Mammary epithelial cell (primary cell): ENCODE measurements at regions of chr19 and their contacts with region 1.

Region 1: DNA sequence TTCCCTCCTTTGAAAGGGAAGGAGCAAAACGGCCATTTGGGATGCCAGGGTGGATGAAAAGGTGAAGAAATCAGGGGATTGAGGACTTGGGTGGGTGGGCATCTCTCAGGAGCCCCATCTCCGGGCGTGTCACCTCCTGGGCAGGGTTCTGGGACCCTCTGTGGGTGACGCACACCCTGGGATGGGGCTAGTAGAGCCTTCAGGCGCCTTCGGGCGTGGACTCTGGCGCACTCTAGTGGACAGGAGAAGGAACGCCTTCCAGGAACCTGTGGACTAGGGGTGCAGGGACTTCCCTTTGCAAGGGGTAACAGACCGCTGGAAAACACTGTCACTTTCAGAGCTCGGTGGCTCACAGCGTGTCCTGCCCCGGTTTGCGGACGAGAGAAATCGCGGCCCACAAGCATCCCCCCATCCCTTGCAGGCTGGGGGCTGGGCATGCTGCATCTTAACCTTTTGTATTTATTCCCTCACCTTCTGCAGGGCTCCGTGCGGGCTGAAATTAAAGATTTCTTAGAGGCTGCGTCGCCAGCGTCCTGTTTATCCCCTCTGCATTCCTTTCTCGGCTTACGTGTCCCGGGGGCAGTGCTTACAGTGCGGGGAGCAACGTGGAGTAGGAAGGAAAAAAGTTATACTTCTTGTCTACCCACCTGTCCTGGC is 15.2 kb upstream of the S1PR4 start:
- DNase-seq: peak; percentile 25
- H3K4me3 ChIP-seq: no peak overlapping the region
- H3K27ac ChIP-seq: no peak overlapping the region
- H3K4me1 ChIP-seq: peaks cover 15% of the 10 kb centered on the region
- H3K27me3 ChIP-seq: no peaks in the 10 kb centered on the region
- CTCF ChIP-seq: peak; percentile 86 to 97

Region 2: GRCh38 chr19:3125900-3126524 is 37.3 kb before region 1 on chr19:
- CTCF ChIA-PET with region 1: no interaction called
- dilution Hi-C with region 1: no loop called
- in situ Hi-C with region 1: no loop called
- intact Hi-C with region 1: loop called (anchors 1 kb)
- DNase-seq: peak; percentile 61
- H3K4me3 ChIP-seq: no peak overlapping the region
- H3K27ac ChIP-seq: no peak overlapping the region
- H3K4me1 ChIP-seq: peaks cover 6% of the 10 kb centered on the region
- H3K27me3 ChIP-seq: no peaks in the 10 kb centered on the region
- CTCF ChIP-seq: peak; percentile 71 to 73

Region 3: GRCh38 chr19:3146677-3147100 is 16.7 kb before region 1 on chr19:
- CTCF ChIA-PET with region 1: no interaction called
- dilution Hi-C with region 1: no loop called
- in situ Hi-C with region 1: no loop called
- intact Hi-C with region 1: loop called (anchors 1 kb)
- DNase-seq: no peak
- H3K4me3 ChIP-seq: no peak overlapping the region
- H3K27ac ChIP-seq: no peak overlapping the region
- H3K4me1 ChIP-seq: peaks cover 18% of the 10 kb centered on the region
- H3K27me3 ChIP-seq: no peaks in the 10 kb centered on the region
- CTCF ChIP-seq: peak; percentile 66 to 87